Mammary epithelial cell (primary cell): ENCODE measurements at regions of chr9 and their contacts with region 1.

Region 1: DNA sequence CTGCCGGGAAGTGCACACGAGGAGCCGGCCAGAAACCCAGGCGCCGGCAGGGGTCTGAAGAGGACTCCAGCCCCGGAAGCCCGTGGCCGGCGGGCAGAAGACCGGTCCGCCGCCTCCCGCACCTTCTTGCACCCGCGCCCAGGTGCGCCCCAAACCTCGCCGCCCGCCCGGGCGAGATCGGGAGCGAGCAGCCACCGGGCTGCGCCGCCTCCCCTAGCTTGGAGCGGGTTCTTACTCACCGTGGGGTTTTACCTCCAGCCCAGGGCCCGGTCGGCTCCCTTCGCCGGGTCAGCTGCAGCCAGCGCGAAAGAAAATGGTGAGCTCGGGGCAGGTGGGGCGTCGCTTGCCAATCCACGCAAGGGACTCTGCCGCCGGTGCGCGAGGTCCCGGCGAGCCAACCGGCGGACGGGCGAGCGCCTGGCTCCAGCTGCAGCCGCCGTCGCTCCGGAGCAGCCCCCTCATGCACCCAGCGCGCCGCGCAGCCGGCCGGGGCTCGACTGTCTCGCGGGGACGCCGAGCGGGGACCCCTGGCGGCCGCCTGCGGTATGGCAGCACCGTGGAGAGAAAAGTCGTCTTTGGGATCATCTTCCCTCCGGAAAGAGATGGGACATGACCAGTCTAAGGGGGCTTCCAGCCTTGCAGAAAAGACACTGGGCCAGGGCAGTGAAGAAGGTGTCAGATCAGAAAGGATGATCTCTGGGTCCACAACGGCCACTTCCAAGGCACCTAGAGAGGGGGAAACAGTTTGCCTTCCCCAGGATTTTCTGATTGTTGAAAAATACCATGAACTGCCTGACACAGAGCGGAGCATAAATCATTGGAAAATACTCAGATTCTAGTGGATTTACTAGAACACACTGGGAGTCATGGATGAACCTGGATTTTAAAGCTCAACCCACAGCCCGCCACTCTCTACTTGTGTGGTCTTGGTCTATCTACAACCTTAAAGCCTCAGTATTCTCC is at the start of gene MOB3B:
- DNase-seq: peak; percentile 71
- H3K4me3 ChIP-seq: peak within 1 kb of the TSS; percentile 68 to 91 (median 71)
- H3K27ac ChIP-seq: peak within 1 kb of the TSS; percentile 98
- H3K4me1 ChIP-seq: peaks cover 31% of the 10 kb centered on the region
- H3K27me3 ChIP-seq: no peaks in the 10 kb centered on the region
- CTCF ChIP-seq: peak; percentile 52 to 86
- total RNA-seq, gene MOB3B: 18.8 to 19.3 TPM

Region 2: GRCh38 chr9:27394154-27394825 is 135.3 kb before region 1 on chr9:
- CTCF ChIA-PET with region 1: no interaction called
- dilution Hi-C with region 1: no loop called
- in situ Hi-C with region 1: no loop called
- intact Hi-C with region 1: loop called (anchors 10 kb)
- DNase-seq: no peak
- H3K4me3 ChIP-seq: no peak overlapping the region
- H3K27ac ChIP-seq: peak overlapping the region; percentile 67
- H3K4me1 ChIP-seq: peaks cover 36% of the 10 kb centered on the region
- H3K27me3 ChIP-seq: no peaks in the 10 kb centered on the region
- CTCF ChIP-seq: no peak

Region 3: GRCh38 chr9:27427273-27427645 is 102.3 kb before region 1 on chr9:
- CTCF ChIA-PET with region 1: no interaction called
- dilution Hi-C with region 1: no loop called
- in situ Hi-C with region 1: loop called in 1 of 2 experiments (anchors 10 kb)
- intact Hi-C with region 1: loop called (anchors 1 kb)
- DNase-seq: peak; percentile 88
- H3K4me3 ChIP-seq: peak overlapping the region in 1 of 3 experiments; percentile 37
- H3K27ac ChIP-seq: peak overlapping the region; percentile 86
- H3K4me1 ChIP-seq: peaks cover 80% of the 10 kb centered on the region
- H3K27me3 ChIP-seq: no peaks in the 10 kb centered on the region
- CTCF ChIP-seq: no peak

Region 4: DNA sequence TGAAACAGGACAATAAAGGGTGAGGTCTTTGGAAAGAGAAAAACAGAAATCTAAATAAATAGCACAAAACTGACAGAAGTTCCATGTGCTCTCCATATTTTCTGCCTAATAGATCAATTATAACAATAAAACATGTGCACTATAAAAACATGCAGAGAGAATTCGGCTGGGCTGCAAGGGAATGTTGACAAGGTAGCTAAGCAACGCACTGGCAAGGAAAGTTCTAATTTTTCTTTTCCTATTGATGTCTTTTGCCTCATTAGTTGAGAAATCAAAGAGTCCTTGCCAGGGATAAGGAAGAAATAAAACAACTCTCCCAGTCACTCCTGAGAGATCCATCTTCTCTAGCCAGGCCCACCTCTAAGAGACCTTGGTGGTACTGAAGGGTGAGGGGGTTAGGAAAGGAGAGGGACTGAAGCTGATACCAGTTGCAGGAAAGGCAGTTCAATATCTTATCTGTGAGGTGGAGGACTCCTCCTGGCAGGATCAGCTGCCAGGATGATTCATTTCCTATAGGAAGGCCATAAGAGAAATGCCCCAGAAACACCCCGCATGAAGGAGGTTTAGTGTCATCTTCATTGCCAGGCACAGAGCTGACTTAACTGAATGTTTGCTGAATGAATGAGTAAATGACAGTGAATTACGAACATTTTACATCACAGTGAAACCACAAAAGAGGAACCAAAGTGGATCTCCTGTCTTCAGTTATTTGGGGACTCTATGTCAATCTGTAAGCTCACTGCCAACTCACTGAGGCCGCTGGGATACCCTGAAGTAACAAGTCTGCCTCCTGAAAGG is 69.2 kb before region 1 on chr9:
- CTCF ChIA-PET with region 1: no interaction called
- dilution Hi-C with region 1: no loop called
- in situ Hi-C with region 1: no loop called
- intact Hi-C with region 1: loop called (anchors 5 kb)
- DNase-seq: peak; percentile 68
- H3K4me3 ChIP-seq: no peak overlapping the region
- H3K27ac ChIP-seq: peak overlapping the region; percentile 63
- H3K4me1 ChIP-seq: peaks cover 29% of the 10 kb centered on the region
- H3K27me3 ChIP-seq: no peaks in the 10 kb centered on the region
- CTCF ChIP-seq: no peak

Region 5: GRCh38 chr9:27548055-27548741 is 18.6 kb after region 1 on chr9:
- CTCF ChIA-PET with region 1: no interaction called
- dilution Hi-C with region 1: no loop called
- in situ Hi-C with region 1: no loop called
- intact Hi-C with region 1: loop called (anchors 2 kb)
- DNase-seq: peak; percentile 35
- H3K4me3 ChIP-seq: no peak overlapping the region
- H3K27ac ChIP-seq: no peak overlapping the region
- H3K4me1 ChIP-seq: no peaks in the 10 kb centered on the region
- H3K27me3 ChIP-seq: no peaks in the 10 kb centered on the region
- CTCF ChIP-seq: peak; percentile 46 to 49

Region 6: GRCh38 chr9:28073270-28073669 is 543.7 kb after region 1 on chr9:
- CTCF ChIA-PET with region 1: no interaction called
- dilution Hi-C with region 1: no loop called
- in situ Hi-C with region 1: no loop called
- intact Hi-C with region 1: loop called (anchors 10 kb)
- DNase-seq: peak; percentile 32
- H3K4me3 ChIP-seq: no peak overlapping the region
- H3K27ac ChIP-seq: no peak overlapping the region
- H3K4me1 ChIP-seq: no peaks in the 10 kb centered on the region
- H3K27me3 ChIP-seq: peaks cover 2% of the 10 kb centered on the region
- CTCF ChIP-seq: peak; percentile 49 to 65